ENCODE measurements at regions of chr1 and their contacts with region 1.

Region 1: DNA sequence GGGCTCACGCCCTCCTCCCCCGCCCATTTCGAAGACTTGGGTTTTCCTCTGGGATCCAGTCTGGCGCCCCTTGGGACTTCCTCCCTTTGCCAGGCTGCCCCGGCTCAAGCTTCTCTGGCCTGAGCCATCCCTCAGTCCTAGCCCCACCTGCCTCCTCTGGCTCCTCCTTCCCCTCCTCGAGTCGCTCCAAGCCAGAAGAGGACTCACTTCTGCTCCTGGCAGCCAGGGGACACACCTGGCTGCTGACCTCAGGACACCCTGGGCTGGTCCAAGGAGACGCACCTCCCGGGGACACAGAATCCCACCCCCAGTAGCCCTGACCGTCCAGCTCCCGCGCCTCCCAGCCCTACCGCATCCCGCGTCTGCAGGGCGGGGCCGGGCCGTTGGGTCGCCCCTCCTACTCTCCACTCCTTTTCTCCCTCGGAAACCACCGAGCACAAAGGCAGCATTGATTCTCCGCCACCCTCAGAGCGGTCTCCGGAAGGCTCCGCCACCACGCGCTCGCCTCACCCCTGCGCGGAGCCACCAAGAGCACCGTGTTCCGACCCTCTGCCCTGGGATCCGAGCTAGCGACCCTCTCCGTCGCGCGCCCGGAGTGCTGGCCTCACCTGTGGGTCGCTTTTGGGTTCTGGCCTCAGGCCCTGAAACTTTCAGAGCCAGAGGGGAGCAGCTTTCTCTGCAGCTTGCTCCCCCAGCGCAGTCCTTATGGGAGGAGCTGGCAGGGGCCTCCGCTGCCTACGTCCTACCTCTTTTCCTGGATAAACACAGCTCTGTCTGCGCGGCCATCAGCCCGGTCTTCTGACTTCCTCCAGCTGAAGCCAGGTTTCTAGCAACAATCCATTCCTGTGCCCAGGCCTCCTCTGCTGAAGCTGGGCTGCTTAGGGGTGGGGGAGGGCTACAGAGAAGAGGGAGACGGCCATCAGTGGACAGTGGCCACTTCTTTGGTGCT is at the start of gene C2CD4D:
- DNase-seq: peak; percentile 94
- H3K4me3 ChIP-seq: peak within 1 kb of the TSS; percentile 41 to 53 (median 52)
- H3K27ac ChIP-seq: peak within 1 kb of the TSS; percentile 94
- H3K4me1 ChIP-seq: peaks cover 57% of the 10 kb centered on the region
- H3K27me3 ChIP-seq: no peaks in the 10 kb centered on the region
- CTCF ChIP-seq: peak in 1 of 2 donors; percentile 19
- total RNA-seq, gene C2CD4D: 0.17 to 0.33 TPM

Region 2: DNA sequence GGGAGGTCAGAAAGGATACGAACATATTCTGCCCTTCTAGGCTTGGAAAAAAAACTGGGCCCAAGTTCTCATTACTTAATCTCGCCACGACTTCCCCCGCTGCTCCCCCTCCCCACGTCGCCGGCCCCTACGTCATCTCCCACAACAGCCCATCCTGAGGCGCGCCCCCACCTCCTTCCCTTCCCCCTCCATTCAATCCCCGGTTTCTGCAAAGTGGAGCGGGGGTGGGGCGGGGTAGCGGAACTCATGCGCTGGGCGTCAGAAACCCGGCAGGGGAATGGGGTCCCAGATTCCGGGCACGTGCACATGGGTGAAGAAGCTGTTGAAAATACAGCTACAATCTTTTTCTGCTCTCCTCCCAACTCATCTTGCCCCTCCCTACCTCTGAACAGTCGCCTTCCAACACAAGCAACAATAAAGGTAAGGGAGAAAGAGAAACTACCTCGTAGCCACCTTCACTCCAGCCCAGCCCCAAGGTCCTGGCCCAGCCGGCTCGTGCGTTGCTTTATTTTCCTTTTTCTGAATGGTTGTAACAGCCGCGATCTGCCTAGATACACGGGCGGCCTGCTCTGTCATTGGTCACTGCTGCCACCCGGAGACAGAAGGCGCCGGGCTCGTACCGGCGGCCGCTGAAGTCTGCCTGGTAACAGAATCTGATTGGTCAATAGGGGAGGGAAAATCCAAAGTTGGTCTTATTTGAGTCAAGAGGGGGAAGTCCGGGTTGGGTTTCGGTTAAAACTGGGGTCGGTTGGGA is 492.8 kb before region 1 on chr1 and contains the start of gene RFX5:
- CTCF ChIA-PET with region 1: no interaction called
- dilution Hi-C with region 1: no loop called
- in situ Hi-C with region 1: no loop called
- intact Hi-C with region 1: loop called (anchors 5 kb)
- DNase-seq: peak; percentile 99
- H3K4me3 ChIP-seq: peak within 1 kb of the TSS; percentile 60 to 93 (median 78)
- H3K27ac ChIP-seq: peak within 1 kb of the TSS; percentile 100
- H3K4me1 ChIP-seq: peaks cover 15% of the 10 kb centered on the region
- H3K27me3 ChIP-seq: no peaks in the 10 kb centered on the region
- CTCF ChIP-seq: no peak
- total RNA-seq, gene RFX5: 45.5 to 45.9 TPM

Region 3: GRCh38 chr1:151534665-151535278 is 305.0 kb before region 1 on chr1:
- CTCF ChIA-PET with region 1: no interaction called
- dilution Hi-C with region 1: no loop called
- in situ Hi-C with region 1: loop called in 1 of 2 experiments (anchors 25 kb)
- intact Hi-C with region 1: loop called (anchors 1 kb)
- DNase-seq: peak; percentile 57
- H3K4me3 ChIP-seq: no peak overlapping the region
- H3K27ac ChIP-seq: no peak overlapping the region
- H3K4me1 ChIP-seq: peaks cover 16% of the 10 kb centered on the region
- H3K27me3 ChIP-seq: no peaks in the 10 kb centered on the region
- CTCF ChIP-seq: peak; percentile 95 to 98

Region 4: DNA sequence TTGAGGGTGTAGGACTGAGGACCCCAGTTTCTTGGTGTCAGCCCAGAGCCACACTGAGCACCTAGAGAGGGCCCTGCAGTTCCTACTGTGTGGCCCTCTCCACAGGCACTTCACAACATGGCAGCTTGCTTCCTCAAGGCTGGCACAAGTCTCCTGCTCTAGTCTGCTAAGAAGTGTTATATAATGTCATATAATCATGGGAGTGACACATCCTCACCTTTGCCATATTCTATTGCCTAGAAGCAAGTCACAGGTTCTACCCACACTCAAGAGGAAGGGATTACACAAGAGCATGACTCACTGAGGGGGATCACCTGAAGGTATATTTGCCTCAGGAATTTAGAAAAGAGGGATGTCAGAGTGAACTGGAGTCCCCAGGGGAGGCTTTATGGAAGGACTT is 233.3 kb before region 1 on chr1:
- CTCF ChIA-PET with region 1: interaction called, 3 read pairs
- dilution Hi-C with region 1: no loop called
- in situ Hi-C with region 1: no loop called
- intact Hi-C with region 1: loop called (anchors 5 kb)
- DNase-seq: peak; percentile 94
- H3K4me3 ChIP-seq: no peak overlapping the region
- H3K27ac ChIP-seq: no peak overlapping the region
- H3K4me1 ChIP-seq: peaks cover 23% of the 10 kb centered on the region
- H3K27me3 ChIP-seq: no peaks in the 10 kb centered on the region
- CTCF ChIP-seq: no peak

Region 5: DNA sequence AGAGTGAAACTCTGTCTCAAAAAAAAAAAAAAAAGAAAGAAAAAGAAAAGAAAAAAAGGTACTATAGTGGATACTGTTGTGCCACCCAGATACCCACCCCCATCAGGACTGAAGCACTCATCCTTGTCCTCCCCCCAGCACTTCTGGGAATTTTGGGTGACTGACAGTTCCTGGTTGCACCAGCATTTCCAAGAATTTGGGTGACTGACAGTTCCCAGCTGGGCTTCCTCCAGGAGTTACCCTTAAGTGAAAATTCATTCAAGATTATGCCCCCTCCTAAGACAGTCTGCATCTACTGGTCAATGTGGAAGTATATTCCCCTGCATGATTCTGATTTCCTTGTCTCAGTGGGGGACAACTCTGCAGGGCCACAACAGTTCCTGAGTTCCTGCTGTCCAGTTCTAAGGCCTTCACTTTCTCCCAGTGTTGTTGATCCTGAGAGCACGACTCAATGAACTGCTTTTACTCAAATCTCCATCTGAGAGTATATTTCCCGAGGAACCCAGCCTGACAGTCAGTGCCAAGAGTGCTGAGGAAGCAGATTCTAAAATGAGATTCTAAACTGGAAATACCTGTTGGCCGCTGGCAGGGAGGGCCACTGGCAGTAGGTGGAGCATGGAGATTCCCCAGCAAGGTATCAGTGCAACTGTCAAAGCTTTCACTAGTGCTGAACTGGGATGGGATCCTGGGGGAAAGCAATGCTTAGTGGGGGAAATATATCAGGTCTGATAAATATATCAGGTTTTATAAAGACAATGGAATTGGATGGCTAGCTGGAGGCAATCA is 99.9 kb before region 1 on chr1:
- CTCF ChIA-PET with region 1: no interaction called
- dilution Hi-C with region 1: no loop called
- in situ Hi-C with region 1: loop called in 1 of 2 experiments (anchors 10 kb)
- intact Hi-C with region 1: loop called (anchors 1 kb)
- DNase-seq: peak; percentile 72
- H3K4me3 ChIP-seq: no peak overlapping the region
- H3K27ac ChIP-seq: no peak overlapping the region
- H3K4me1 ChIP-seq: peaks cover 5% of the 10 kb centered on the region
- H3K27me3 ChIP-seq: no peaks in the 10 kb centered on the region
- CTCF ChIP-seq: peak in 1 of 2 donors; percentile 41

Region 6: DNA sequence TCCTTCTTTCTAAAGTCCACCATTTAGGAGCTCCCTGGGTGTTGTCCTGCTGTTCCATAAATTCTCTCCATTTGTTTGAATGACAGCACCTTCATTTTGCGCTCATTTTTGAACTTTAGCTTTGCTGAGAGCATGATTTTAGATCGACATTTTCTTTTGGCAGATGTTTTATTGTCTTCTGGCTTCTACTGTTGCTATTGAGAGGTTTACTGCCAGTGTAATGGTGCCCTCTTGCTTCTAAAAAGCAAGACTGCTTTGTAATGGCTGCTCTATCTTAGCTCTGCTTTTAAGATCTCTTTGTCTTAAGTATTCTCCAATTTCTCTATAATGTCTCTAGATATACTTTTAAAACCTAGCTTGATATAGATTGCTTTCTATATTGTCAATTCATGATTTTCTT is 41.7 kb after region 1 on chr1:
- CTCF ChIA-PET with region 1: no interaction called
- dilution Hi-C with region 1: no loop called
- in situ Hi-C with region 1: no loop called
- intact Hi-C with region 1: loop called (anchors 2 kb)
- DNase-seq: no peak
- H3K4me3 ChIP-seq: no peak overlapping the region
- H3K27ac ChIP-seq: no peak overlapping the region
- H3K4me1 ChIP-seq: peaks cover 12% of the 10 kb centered on the region
- H3K27me3 ChIP-seq: no peaks in the 10 kb centered on the region
- CTCF ChIP-seq: peak; percentile 18 to 55

Measured in mammary epithelial cell (primary cell).